ENCODE measurements at regions of chr6 and their contacts with region 1.

Region 1: GRCh38 chr6:30828027-30828960 is 56.0 kb upstream of the DDR1 start:
- DNase-seq: peak; percentile 93
- H3K4me3 Mint-ChIP-seq: no peak overlapping the region
- H3K27ac Mint-ChIP-seq: no peak overlapping the region
- H3K4me1 Mint-ChIP-seq: peaks cover 25% of the 10 kb centered on the region
- H3K27me3 Mint-ChIP-seq: no peaks in the 10 kb centered on the region
- CTCF ChIP-seq: peak; percentile 92

Region 2: GRCh38 chr6:30742316-30743098 is 85.8 kb before region 1 on chr6 and contains the start of gene FLOT1:
- CTCF ChIA-PET with region 1: interaction called, 6 read pairs
- POLR2A ChIA-PET with region 1: interaction called, 29 read pairs
- intact Hi-C with region 1: loop called (anchors 2 kb)
- DNase-seq: peak; percentile 99
- H3K4me3 Mint-ChIP-seq: peak within 1 kb of the TSS; percentile 91
- H3K27ac Mint-ChIP-seq: peak within 1 kb of the TSS; percentile 90
- H3K4me1 Mint-ChIP-seq: peaks cover 38% of the 10 kb centered on the region
- H3K27me3 Mint-ChIP-seq: no peaks in the 10 kb centered on the region
- CTCF ChIP-seq: no peak
- total RNA-seq, gene FLOT1: 61.8 and 73.7 TPM in 2 replicates

Region 3: DNA sequence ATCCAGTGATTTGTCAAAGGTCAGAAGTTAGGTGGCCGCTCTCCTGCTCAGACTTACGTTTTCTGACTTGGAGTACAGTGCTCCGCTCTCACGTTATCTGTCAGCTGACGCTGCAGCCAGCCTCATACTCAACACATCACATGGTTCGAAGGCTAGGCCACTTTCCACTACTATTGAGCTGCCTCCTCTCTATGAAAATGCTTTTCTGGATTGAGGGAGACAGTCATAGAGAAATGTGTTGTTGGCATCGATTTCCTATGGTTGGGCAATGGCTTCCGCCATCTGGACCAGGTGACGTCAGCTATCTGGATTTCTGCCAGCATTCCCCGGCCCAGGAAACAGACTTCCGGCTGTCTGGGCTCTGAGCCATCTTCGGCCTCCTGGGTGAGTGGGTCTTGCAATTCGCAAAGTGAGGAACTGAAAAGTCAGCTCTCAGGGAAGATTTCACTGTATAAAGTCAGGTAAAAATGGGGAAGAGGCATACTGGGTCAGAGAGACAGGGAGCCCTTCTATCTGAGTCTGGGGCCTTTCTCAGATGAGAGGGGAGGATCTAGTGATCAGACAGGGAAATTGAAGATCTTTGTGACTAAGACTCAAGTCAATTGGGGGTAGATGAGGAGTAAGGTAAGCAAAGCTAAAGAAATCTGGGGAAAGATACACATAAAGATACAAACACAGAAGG is 46.4 kb before region 1 on chr6:
- CTCF ChIA-PET with region 1: interaction called, 37 read pairs
- POLR2A ChIA-PET with region 1: interaction called, 11 read pairs
- intact Hi-C with region 1: no loop called
- DNase-seq: peak; percentile 98
- H3K4me3 Mint-ChIP-seq: peak overlapping the region; percentile 42
- H3K27ac Mint-ChIP-seq: peak overlapping the region; percentile 91
- H3K4me1 Mint-ChIP-seq: peaks cover 57% of the 10 kb centered on the region
- H3K27me3 Mint-ChIP-seq: no peaks in the 10 kb centered on the region
- CTCF ChIP-seq: no peak

Region 4: DNA sequence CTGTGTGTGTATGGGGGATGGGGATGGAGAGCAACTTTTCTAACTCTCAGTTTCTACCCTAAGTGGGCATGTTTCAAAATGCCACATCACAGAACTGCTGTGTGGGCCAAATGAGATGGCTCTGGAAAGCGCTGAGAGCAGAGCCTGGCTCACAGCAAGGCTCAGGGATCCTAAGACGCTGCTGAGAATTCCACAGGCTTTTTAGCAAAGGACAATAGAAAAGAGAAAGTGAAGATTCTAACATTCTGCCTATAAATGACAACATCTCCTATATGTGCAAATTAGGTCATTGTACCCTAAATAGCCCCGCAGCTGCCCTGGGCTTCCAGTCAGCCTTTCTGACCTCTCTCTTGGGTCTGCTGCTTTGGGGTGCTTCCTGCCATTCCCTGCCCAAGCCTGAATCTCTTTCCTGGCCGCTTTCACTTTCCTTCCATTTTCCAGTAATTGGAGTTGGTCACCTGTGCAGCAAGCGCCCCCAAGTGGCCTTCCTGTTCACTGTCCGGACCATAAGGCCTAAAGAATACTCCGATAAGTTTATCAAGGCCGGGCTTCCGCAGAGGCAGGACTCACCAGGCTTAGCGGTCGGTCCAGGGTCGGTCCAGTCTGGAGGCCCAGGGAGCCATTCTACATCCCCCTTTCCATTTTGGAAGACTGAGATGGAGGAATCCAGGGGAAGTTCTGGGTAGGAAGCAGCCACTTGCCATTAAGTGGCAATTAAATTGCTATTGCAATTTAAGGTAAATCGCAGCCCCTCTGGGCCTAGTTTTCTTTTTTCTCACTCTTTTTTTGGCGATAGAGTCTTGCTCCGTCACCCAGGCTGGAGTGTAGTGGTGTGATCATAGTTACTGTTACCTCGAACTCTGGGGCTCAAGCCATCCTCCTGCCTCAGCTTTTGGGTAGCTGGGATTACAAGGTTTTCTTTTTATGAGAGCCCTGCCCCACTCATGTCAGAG is 49.4 kb after region 1 on chr6:
- CTCF ChIA-PET with region 1: interaction called, 92 read pairs
- POLR2A ChIA-PET with region 1: interaction called, 80 read pairs
- intact Hi-C with region 1: loop called (anchors 1 kb)
- DNase-seq: peak; percentile 93
- H3K4me3 Mint-ChIP-seq: peak overlapping the region; percentile 61
- H3K27ac Mint-ChIP-seq: peak overlapping the region; percentile 95
- H3K4me1 Mint-ChIP-seq: peaks cover 40% of the 10 kb centered on the region
- H3K27me3 Mint-ChIP-seq: no peaks in the 10 kb centered on the region
- CTCF ChIP-seq: peak; percentile 90

Region 5: GRCh38 chr6:31068669-31069340 is 240.5 kb after region 1 on chr6:
- CTCF ChIA-PET with region 1: interaction called, 11 read pairs
- POLR2A ChIA-PET with region 1: interaction called, 5 read pairs
- intact Hi-C with region 1: loop called (anchors 1 kb)
- DNase-seq: peak; percentile 82
- H3K4me3 Mint-ChIP-seq: no peak overlapping the region
- H3K27ac Mint-ChIP-seq: no peak overlapping the region
- H3K4me1 Mint-ChIP-seq: peaks cover 5% of the 10 kb centered on the region
- H3K27me3 Mint-ChIP-seq: no peaks in the 10 kb centered on the region
- CTCF ChIP-seq: peak; percentile 81

Region 6: DNA sequence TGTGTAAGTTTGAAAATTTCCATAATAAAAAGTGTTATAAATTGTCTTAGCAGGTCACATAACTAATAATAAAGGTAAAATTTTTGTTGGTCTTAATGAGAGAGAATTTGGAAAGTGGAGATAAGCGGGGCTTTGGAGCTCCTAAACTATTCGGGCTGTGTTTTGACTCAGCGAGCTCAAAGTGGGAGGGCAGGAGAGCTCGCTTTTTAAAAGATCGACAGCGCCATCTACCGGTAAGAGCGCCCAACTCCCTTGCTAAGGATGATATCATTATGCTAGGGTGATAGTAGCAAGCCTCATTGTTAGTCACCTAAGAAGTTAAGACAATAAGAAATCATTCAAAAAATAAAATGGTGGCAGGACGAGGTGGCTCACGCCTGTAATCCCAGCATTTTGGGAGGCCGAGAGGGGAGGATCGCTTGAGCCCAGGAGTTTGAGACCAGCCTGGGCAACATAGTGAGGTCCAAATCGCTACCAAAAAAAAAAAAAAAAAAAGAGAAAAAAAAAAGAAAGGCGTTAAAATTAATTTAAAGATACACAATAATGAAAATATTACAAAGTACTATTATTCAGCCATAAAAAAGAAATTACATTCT is 259.3 kb after region 1 on chr6:
- CTCF ChIA-PET with region 1: interaction called, 5 read pairs
- POLR2A ChIA-PET with region 1: no interaction called
- intact Hi-C with region 1: loop called (anchors 1 kb)
- DNase-seq: peak; percentile 91
- H3K4me3 Mint-ChIP-seq: no peak overlapping the region
- H3K27ac Mint-ChIP-seq: peak overlapping the region; percentile 16
- H3K4me1 Mint-ChIP-seq: peaks cover 21% of the 10 kb centered on the region
- H3K27me3 Mint-ChIP-seq: no peaks in the 10 kb centered on the region
- CTCF ChIP-seq: peak; percentile 65

Measured in MCF 10A (cell line).